PC-3 (cell line): ENCODE measurements at regions of chr2 and their contacts with region 1.

Region 1: GRCh38 chr2:152175458-152176325 is at the start of gene STAM2:
- DNase-seq: peak; percentile 94
- ATAC-seq: peak; percentile 75
- H3K4me3 ChIP-seq: peak within 1 kb of the TSS; percentile 94
- H3K27ac ChIP-seq: peak within 1 kb of the TSS; percentile 86
- H3K4me1 ChIP-seq: peaks cover 21% of the 10 kb centered on the region
- H3K27me3 ChIP-seq: no peaks in the 10 kb centered on the region
- CTCF ChIP-seq: peak; percentile 90
- total RNA-seq, gene STAM2: 18.0 and 21.0 TPM in 2 replicates

Region 2: GRCh38 chr2:152106464-152106863 is 69.2 kb before region 1 on chr2:
- CTCF ChIA-PET with region 1: no interaction called
- POLR2A ChIA-PET with region 1: no interaction called
- intact Hi-C with region 1: loop called (anchors 5 kb)
- DNase-seq: peak; percentile 65
- ATAC-seq: peak; percentile 82
- H3K4me3 ChIP-seq: no peak overlapping the region
- H3K27ac ChIP-seq: no peak overlapping the region
- H3K4me1 ChIP-seq: peaks cover 5% of the 10 kb centered on the region; the same call in 1 of the 2 replicates
- H3K27me3 ChIP-seq: 0 out of 2 replicates have a peak, but pooled peaks cover under 1% of the 10 kb centered on the region
- CTCF ChIP-seq: no peak

Region 3: GRCh38 chr2:152421521-152422370 is 246.1 kb after region 1 on chr2:
- CTCF ChIA-PET with region 1: no interaction called
- POLR2A ChIA-PET with region 1: no interaction called
- intact Hi-C with region 1: no loop called
- DNase-seq: peak; percentile 98
- ATAC-seq: peak; percentile 95
- H3K4me3 ChIP-seq: no peak overlapping the region
- H3K27ac ChIP-seq: peak overlapping the region; percentile 82
- H3K4me1 ChIP-seq: peaks cover 26% of the 10 kb centered on the region
- H3K27me3 ChIP-seq: no peaks in the 10 kb centered on the region
- CTCF ChIP-seq: no peak

Region 4: GRCh38 chr2:152635635-152636298 is 460.1 kb after region 1 on chr2:
- CTCF ChIA-PET with region 1: interaction called, 12 read pairs
- POLR2A ChIA-PET with region 1: interaction called, 5 read pairs
- intact Hi-C with region 1: loop called (anchors 1 kb)
- DNase-seq: peak; percentile 69
- ATAC-seq: peak; percentile 84
- H3K4me3 ChIP-seq: no peak overlapping the region
- H3K27ac ChIP-seq: no peak overlapping the region
- H3K4me1 ChIP-seq: no peaks in the 10 kb centered on the region
- H3K27me3 ChIP-seq: no peaks in the 10 kb centered on the region
- CTCF ChIP-seq: peak; percentile 85

Region 5: GRCh38 chr2:152740743-152741328 is 565.1 kb after region 1 on chr2:
- CTCF ChIA-PET with region 1: no interaction called
- POLR2A ChIA-PET with region 1: no interaction called
- intact Hi-C with region 1: loop called (anchors 5 kb)
- DNase-seq: peak; percentile 80
- ATAC-seq: no peak
- H3K4me3 ChIP-seq: no peak overlapping the region
- H3K27ac ChIP-seq: no peak overlapping the region
- H3K4me1 ChIP-seq: no peaks in the 10 kb centered on the region
- H3K27me3 ChIP-seq: no peaks in the 10 kb centered on the region
- CTCF ChIP-seq: peak; percentile 90